Activated T-helper 1 cell treated with anti-CD3 and anti-CD28 coated beads, Interleukin-12 subunit alpha, Interleukin-12 subunit beta, Interleukin-2, Interleukin-4 antibody, amounts not matched to agents 30 ng/mL and 10 ng/mL and 1 ng/mL, durations not matched to agents 14 hours and 24 hours and 36 hours (primary cell): ENCODE measurements at regions of chr11 and their contacts with region 1.

Region 1: DNA sequence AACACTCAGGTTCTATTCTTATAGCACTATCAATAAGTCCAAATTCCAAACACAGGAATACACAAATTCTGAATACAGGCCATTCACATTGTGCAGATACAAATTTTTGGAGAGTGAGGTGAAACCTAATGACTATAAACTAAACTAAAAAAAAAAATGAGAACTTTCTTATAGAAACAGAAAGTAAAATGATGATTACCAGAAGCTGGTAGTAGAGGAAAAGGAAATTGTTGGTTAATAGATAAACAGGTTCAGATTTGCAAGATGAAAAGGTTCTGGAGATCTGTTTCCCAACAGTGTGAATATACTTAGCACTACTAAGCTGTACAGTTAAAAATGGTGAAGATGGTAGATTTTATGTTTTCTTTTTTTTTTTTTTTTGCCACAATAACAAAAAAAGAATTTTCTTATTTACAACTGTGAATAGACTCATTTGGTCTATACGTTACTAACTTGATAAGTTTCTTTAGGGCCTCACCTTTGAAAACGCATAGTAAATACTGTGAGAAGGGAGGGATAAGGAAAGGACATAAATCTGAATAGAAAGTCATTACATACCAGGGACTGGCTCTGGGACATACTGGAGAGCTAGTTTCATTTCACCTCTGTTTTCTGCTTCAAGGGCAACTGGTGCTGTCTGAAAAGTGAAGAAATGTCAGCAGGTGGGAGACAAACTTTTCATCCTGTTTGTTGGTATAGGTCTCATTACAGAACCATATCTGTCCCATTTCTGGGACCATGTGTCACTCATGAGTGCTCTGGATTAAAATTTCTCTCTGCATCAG is 14.2 kb upstream of the CCDC89 start:
- DNase-seq: no peak
- H3K4me3 Mint-ChIP-seq: peak overlapping the region; percentile 45
- H3K27ac Mint-ChIP-seq: peak overlapping the region; percentile 78
- H3K4me1 Mint-ChIP-seq: peaks cover 49% of the 10 kb centered on the region
- H3K27me3 Mint-ChIP-seq: no peaks in the 10 kb centered on the region

Region 2: GRCh38 chr11:85627998-85628770 is 72.0 kb before region 1 on chr11 and contains the start of gene TMEM126B:
- intact Hi-C with region 1: loop called (anchors 2 kb)
- DNase-seq: peak; percentile 96
- H3K4me3 Mint-ChIP-seq: peak within 1 kb of the TSS; percentile 97
- H3K27ac Mint-ChIP-seq: peak within 1 kb of the TSS; percentile 94
- H3K4me1 Mint-ChIP-seq: peaks cover 52% of the 10 kb centered on the region
- H3K27me3 Mint-ChIP-seq: peaks cover 6% of the 10 kb centered on the region
- total RNA-seq, gene TMEM126B: 52.5 and 57.2 TPM in 2 replicates

Region 3: GRCh38 chr11:85766721-85767161 is 66.6 kb after region 1 on chr11:
- intact Hi-C with region 1: loop called (anchors 5 kb)
- DNase-seq: no peak
- H3K4me3 Mint-ChIP-seq: no peak overlapping the region
- H3K27ac Mint-ChIP-seq: no peak overlapping the region
- H3K4me1 Mint-ChIP-seq: peaks cover 84% of the 10 kb centered on the region
- H3K27me3 Mint-ChIP-seq: no peaks in the 10 kb centered on the region